ENCODE measurements at regions of chr18 and their contacts with region 1.

Region 1: DNA sequence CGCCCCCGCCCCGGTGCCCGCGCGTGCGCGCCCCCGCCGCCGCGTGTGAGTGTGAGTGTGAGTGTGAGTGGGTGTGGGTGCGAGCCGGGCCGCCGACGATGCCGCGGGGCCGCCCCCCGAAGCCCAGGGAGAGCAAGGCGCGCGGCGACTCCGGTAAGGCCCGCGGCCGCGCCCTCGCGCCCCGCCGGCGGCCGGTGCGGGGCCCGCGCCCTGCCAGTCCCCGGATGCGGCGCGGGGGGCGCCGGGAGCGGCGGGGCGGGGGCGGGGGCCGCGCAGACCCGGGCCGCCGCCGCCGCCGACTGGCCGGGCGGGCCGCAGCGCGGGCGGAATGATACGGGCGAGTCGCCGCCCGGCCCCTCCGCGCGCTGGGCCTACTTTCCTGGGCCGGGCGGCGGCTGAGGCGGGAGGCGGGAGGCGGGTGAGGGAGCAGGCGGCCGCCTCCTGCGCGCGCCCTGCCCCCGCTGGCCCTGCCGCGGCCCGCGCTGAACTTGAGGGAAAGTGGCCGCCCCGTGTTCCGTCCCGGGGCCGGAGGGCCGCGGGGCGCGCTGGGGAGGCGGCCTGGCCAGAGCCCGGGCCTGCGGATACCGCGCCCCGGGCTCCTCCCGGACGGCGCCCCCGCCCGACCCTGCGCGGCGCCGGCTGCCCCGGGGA is at the start of gene ZNF236:
- DNase-seq: peak; percentile 50 to 74
- H3K4me3 ChIP-seq: peak within 1 kb of the TSS; percentile 59 to 94 (median 83)
- H3K27ac ChIP-seq: peak within 1 kb of the TSS; percentile 95 to 99
- H3K4me1 ChIP-seq: peaks cover 0 to 3% of the 10 kb centered on the region in 2 donors
- H3K27me3 ChIP-seq: no peaks in the 10 kb centered on the region
- CTCF ChIP-seq: peak in 1 of 3 donors; percentile 9
- POLR2A ChIP-seq: no peak
- total RNA-seq, gene ZNF236: 12.3 to 28.2 (median 27.1) TPM

Region 2: GRCh38 chr18:75790796-75791195 is 1031.8 kb before region 1 on chr18:
- intact Hi-C with region 1: no loop called
- DNase-seq: no peak
- H3K4me3 ChIP-seq: no peak overlapping the region
- H3K27ac ChIP-seq: no peak overlapping the region
- H3K4me1 ChIP-seq: no peaks in the 10 kb centered on the region
- H3K27me3 ChIP-seq: no peaks in the 10 kb centered on the region
- CTCF ChIP-seq: no peak
- POLR2A ChIP-seq: no peak

Region 3: GRCh38 chr18:75984853-75985252 is 837.8 kb before region 1 on chr18:
- intact Hi-C with region 1: no loop called
- DNase-seq: no peak
- H3K4me3 ChIP-seq: no peak overlapping the region
- H3K27ac ChIP-seq: no peak overlapping the region
- H3K4me1 ChIP-seq: no peaks in the 10 kb centered on the region
- H3K27me3 ChIP-seq: no peaks in the 10 kb centered on the region
- CTCF ChIP-seq: no peak
- POLR2A ChIP-seq: no peak

Region 4: GRCh38 chr18:76752400-76752799 is 70.2 kb before region 1 on chr18:
- intact Hi-C with region 1: loop called (anchors 2 kb)
- DNase-seq: no peak
- H3K4me3 ChIP-seq: no peak overlapping the region
- H3K27ac ChIP-seq: no peak overlapping the region
- H3K4me1 ChIP-seq: no peaks in the 10 kb centered on the region
- H3K27me3 ChIP-seq: no peaks in the 10 kb centered on the region
- CTCF ChIP-seq: no peak
- POLR2A ChIP-seq: no peak

Region 5: GRCh38 chr18:76783759-76784484 is 38.7 kb before region 1 on chr18:
- intact Hi-C with region 1: loop called (anchors 2 kb)
- DNase-seq: no peak
- H3K4me3 ChIP-seq: no peak overlapping the region
- H3K27ac ChIP-seq: no peak overlapping the region
- H3K4me1 ChIP-seq: no peaks in the 10 kb centered on the region
- H3K27me3 ChIP-seq: no peaks in the 10 kb centered on the region
- CTCF ChIP-seq: no peak
- POLR2A ChIP-seq: no peak